ENCODE measurements at regions of chr1 and their contacts with region 1.

Region 1: GRCh38 chr1:201955009-201955728 is at the start of gene TIMM17A:
- DNase-seq: peak; percentile 90 to 95 (median 90)
- H3K4me3 ChIP-seq: peak within 1 kb of the TSS; percentile 83 to 99
- H3K4me3 Mint-ChIP-seq: peak within 1 kb of the TSS; percentile 92 to 99 (median 98)
- H3K27ac ChIP-seq: peak within 1 kb of the TSS; percentile 83
- H3K27ac Mint-ChIP-seq: peak within 1 kb of the TSS; percentile 97 to 99 (median 98)
- H3K4me1 ChIP-seq: peaks cover 19% of the 10 kb centered on the region
- H3K4me1 Mint-ChIP-seq: peaks cover 12 to 30% (median 20%) of the 10 kb centered on the region in 4 donors
- H3K27me3 ChIP-seq: no peaks in the 10 kb centered on the region
- H3K27me3 Mint-ChIP-seq: no peaks in the 10 kb centered on the region
- total RNA-seq, gene TIMM17A: 26.0 to 27.1 TPM

Region 2: GRCh38 chr1:201828820-201829774 is 126.1 kb before region 1 on chr1 and contains the start of gene IPO9:
- CTCF ChIA-PET with region 1: no interaction called
- POLR2A ChIA-PET with region 1: interaction called, 3 read pairs
- intact Hi-C with region 1: loop called (anchors 5 kb)
- DNase-seq: peak; percentile 92 to 96 (median 94)
- H3K4me3 ChIP-seq: peak within 1 kb of the TSS; percentile 59 to 99
- H3K4me3 Mint-ChIP-seq: peak within 1 kb of the TSS; percentile 93 to 99 (median 97)
- H3K27ac ChIP-seq: peak within 1 kb of the TSS; percentile 81
- H3K27ac Mint-ChIP-seq: peak within 1 kb of the TSS; percentile 82 to 99 (median 96)
- H3K4me1 ChIP-seq: peaks cover 44% of the 10 kb centered on the region
- H3K4me1 Mint-ChIP-seq: peaks cover 30 to 51% (median 38%) of the 10 kb centered on the region in 4 donors
- H3K27me3 ChIP-seq: no peaks in the 10 kb centered on the region
- H3K27me3 Mint-ChIP-seq: no peaks in the 10 kb centered on the region
- total RNA-seq, gene IPO9: 41.2 to 42.7 TPM

Region 3: DNA sequence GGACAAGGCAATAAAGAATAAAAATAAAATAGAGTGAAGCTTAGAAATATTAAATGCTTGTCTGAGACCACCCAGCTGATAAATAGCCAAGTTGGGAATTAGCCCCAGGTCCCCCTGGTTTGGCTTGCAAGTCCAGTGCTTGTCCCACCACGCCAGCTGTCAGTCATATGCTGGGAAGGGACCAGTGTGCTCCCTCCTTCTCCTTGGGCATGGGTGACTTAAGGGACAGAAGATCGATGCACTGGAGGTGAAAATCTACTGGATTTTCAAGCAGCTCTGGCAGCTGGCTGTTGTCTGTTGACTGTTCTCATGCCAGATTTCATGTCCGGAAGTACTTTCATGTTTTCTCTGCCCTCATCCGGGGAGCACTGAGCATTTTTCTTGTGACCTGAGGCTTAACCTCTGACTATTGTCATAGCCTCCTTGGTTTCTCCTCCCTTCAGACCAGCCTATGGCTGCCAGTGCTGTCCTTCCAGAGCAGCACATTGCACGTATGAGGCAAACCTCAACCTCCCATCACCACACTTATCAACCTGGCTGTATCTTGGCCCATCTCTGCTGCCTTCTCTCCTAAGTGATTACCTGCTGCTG is 21.2 kb before region 1 on chr1:
- CTCF ChIA-PET with region 1: no interaction called
- POLR2A ChIA-PET with region 1: no interaction called
- intact Hi-C with region 1: no loop called
- DNase-seq: no peak
- H3K4me3 ChIP-seq: no peak overlapping the region
- H3K4me3 Mint-ChIP-seq: no peak overlapping the region
- H3K27ac ChIP-seq: no peak overlapping the region
- H3K27ac Mint-ChIP-seq: no peak overlapping the region
- H3K4me1 ChIP-seq: no peaks in the 10 kb centered on the region
- H3K4me1 Mint-ChIP-seq: no peaks in the 10 kb centered on the region
- H3K27me3 ChIP-seq: no peaks in the 10 kb centered on the region
- H3K27me3 Mint-ChIP-seq: peaks cover 2 to 11% of the 10 kb centered on the region in 2 donors

Region 4: DNA sequence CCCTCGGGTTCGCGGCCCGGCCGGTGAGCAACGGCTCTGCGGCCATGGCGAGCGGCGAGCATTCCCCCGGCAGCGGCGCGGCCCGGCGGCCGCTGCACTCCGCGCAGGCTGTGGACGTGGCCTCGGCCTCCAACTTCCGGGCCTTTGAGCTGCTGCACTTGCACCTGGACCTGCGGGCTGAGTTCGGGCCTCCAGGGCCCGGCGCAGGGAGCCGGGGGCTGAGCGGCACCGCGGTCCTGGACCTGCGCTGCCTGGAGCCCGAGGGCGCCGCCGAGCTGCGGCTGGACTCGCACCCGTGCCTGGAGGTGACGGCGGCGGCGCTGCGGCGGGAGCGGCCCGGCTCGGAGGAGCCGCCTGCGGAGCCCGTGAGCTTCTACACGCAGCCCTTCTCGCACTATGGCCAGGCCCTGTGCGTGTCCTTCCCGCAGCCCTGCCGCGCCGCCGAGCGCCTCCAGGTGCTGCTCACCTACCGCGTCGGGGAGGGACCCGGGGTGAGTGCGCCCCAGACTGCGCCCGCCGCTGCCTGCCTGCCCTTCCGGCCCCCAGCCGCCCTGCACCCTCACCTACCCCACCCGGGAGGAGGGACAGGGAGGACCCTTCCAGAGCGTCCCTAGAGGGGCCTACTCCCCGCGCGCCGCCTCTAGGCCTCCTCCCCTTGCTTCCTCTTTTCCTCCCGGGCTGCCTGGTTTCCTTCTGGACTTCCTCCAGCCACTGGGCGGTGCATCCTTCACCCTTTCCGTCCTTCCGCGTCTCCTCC is 27.6 kb after region 1 on chr1 and contains the start of gene RNPEP:
- CTCF ChIA-PET with region 1: interaction called, 3 read pairs
- POLR2A ChIA-PET with region 1: interaction called, 20 read pairs
- intact Hi-C with region 1: loop called (anchors 1 kb)
- DNase-seq: peak; percentile 50 to 71 (median 60)
- H3K4me3 ChIP-seq: peak within 1 kb of the TSS; percentile 52 to 77
- H3K4me3 Mint-ChIP-seq: peak within 1 kb of the TSS; percentile 92 to 100 (median 98)
- H3K27ac ChIP-seq: peak within 1 kb of the TSS; percentile 63
- H3K27ac Mint-ChIP-seq: peak within 1 kb of the TSS; percentile 81 to 98 (median 94)
- H3K4me1 ChIP-seq: peaks cover 17% of the 10 kb centered on the region
- H3K4me1 Mint-ChIP-seq: peaks cover 18 to 25% (median 22%) of the 10 kb centered on the region in 4 donors
- H3K27me3 ChIP-seq: no peaks in the 10 kb centered on the region
- H3K27me3 Mint-ChIP-seq: no peaks in the 10 kb centered on the region
- total RNA-seq, gene RNPEP: 25.9 to 29.1 TPM